A673 (cell line): ENCODE measurements at regions of chr18 and their contacts with region 1.

Region 1: DNA sequence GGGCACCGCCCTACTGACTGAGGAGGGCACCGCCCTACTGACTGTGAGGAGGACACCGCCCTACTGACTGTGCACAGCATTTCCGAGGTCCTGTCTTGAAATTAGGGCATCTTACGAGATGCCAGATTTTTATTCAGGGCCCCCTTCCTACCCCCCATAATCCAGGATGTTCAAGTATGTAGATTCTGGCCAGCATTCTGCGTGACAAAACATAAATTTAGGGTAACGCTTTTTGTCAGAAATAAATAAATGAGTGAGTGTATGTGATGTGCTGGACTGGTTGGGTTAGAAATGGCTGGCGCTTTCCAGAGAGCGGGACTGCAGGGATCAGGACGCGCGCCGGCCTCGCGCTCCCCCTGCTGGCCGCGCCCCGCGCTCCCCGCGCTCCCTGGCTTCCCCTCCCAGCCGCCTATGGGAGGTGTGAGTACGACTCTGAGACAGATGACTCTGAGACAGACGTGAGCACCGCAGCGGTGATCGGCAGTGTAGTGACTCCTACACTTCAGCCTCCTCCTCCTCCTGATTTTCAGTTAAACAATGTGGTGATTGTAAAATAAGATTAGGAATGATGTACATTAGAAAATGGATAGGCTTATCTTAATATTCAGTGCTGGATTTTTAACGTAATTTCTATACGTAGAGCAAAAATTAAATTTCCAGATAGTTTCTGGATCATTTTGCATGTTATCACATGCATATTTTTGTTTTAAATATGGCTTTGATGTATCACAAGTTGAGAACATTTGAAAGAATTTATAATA is 149.2 kb upstream of the NFATC1 start:
- DNase-seq: peak; percentile 84
- H3K4me3 ChIP-seq: no peak overlapping the region
- H3K27ac ChIP-seq: no peak overlapping the region
- H3K4me1 ChIP-seq: peaks cover 21% of the 10 kb centered on the region
- H3K27me3 ChIP-seq: peaks cover 30% of the 10 kb centered on the region
- CTCF ChIP-seq: peak; percentile 99

Region 2: DNA sequence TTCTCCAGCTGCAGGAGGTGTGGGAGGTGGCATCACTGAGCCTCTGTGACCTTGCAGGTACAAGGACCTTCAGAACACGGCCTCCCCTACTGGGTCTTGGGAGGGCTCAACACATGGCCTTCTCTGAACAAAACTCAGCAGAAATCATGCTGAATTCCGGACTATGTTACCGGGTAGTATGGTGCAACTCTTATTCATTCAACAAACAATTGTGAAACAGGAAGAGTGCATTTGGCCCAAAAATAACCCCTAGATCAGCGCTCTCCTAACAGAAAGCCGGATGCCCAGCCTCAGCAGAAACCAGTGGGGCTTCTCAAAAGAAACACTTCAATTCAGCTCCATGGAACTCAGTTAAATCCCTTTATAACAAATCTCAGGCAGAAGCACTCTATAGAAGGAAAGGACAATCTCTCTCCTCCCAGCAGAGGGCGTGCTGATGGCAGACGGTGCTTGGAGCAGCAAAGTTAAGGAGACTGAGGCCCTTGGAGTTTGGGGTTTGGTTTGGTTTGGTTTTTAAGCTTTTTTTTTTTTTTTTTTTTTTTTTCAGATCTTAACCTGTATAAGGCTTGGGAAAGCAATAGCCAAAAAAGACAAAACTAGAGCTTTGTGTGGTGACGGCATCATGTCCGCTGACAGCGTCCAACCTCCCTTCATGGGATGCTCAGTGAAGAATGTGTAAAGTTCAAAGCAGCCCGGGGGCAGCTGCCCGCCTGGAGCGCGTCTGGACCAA is 371.1 kb before region 1 on chr18:
- CTCF ChIA-PET with region 1: no interaction called
- POLR2A ChIA-PET with region 1: no interaction called
- intact Hi-C with region 1: loop called (anchors 5 kb)
- DNase-seq: peak; percentile 58
- H3K4me3 ChIP-seq: no peak overlapping the region
- H3K27ac ChIP-seq: no peak overlapping the region
- H3K4me1 ChIP-seq: no peaks in the 10 kb centered on the region
- H3K27me3 ChIP-seq: peaks cover 58% of the 10 kb centered on the region
- CTCF ChIP-seq: peak; percentile 80

Region 3: DNA sequence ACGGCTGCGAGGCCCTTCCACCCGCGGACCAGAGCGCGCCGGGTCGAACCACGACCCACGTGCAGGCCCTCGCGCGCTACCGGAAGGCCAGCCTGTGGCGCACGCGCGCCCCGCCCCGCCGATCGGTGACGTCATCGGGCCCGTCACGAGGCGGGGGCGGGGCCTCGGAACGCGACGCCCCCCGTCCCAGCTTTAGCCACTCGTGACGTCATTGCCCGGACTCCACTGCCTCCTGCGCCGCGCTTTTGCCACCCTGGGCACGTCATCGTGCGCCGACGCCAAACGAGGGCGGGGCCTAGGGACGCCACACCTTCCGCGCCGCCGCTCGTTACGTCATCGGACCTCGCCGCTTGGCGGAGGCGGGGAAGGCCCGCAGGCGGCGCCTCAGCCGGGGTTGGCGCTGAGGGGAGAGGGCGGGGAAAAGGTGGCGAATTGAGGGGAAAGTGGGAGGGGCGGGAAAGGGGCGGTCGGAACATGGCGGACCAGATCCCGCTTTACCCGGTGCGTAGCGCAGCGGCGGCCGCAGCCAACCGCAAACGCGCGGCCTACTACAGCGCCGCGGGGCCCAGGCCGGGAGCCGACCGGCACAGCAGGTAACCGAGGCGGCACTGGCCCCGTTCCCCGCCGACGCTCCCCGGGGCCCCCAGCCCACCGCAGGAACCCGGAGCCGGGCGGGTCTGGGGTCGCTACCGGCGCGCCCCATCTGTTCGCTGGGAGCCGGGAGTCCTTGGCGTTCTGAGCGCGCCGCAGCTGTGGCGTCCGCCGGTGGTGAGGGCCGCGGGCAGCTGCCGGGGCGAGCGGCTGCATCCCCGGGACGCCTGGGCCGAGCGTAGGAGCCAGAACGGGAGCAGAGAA is 177.4 kb before region 1 on chr18 and contains the start of gene ATP9B:
- CTCF ChIA-PET with region 1: no interaction called
- POLR2A ChIA-PET with region 1: no interaction called
- intact Hi-C with region 1: loop called (anchors 5 kb)
- DNase-seq: peak; percentile 96
- H3K4me3 ChIP-seq: peak within 1 kb of the TSS; percentile 81
- H3K27ac ChIP-seq: peak within 1 kb of the TSS; percentile 87
- H3K4me1 ChIP-seq: no peaks in the 10 kb centered on the region
- H3K27me3 ChIP-seq: no peaks in the 10 kb centered on the region
- CTCF ChIP-seq: no peak
- total RNA-seq, gene ATP9B: 17.9 and 22.3 TPM in 2 replicates